PC-9 (cell line): ENCODE measurements at regions of chr7 and their contacts with region 1.

Region 1: DNA sequence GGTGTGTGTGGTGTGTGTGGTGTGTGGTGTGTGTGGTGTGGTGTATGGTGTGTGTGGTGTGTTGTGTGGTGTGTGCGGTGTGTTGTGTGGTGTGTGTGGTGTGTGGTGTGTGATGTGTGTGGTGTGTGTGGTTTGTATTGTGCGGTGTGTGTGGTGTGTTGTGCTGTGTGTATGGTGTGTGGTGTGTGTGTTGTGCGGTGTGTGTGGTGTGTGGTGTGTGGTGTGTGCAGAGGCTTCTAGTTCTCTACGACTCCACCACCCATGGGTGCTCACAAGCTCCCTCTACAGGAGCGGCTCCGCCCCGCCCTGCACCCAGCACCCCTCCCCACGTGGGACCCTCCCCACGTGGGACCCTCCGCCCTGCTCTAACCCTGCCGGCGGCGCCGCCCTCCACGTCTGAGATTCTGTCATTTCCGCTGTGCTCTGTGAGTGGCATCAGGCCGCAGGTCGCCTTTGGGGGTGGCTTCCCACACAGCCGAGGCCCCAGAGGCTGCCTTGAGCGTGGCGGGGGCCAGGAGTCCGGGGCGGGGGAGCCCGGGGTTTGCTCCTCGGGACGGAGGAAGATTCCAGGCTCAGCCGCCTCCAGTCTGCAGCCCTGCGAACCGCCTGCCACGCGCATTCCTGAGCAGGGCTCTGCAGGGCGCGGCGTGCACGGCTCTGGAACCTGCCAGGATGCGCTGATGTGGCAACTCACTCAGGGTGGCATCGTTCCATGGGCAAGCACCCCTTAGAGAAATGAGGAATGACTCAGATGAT is 37.0 kb upstream of the DNAJB6 start:
- DNase-seq: peak; percentile 66 to 72
- H3K4me3 ChIP-seq: no peak overlapping the region
- H3K27ac ChIP-seq: no peak overlapping the region
- H3K4me1 ChIP-seq: peaks cover 34% of the 10 kb centered on the region
- H3K27me3 ChIP-seq: no peaks in the 10 kb centered on the region
- CTCF ChIP-seq: no peak

Region 2: DNA sequence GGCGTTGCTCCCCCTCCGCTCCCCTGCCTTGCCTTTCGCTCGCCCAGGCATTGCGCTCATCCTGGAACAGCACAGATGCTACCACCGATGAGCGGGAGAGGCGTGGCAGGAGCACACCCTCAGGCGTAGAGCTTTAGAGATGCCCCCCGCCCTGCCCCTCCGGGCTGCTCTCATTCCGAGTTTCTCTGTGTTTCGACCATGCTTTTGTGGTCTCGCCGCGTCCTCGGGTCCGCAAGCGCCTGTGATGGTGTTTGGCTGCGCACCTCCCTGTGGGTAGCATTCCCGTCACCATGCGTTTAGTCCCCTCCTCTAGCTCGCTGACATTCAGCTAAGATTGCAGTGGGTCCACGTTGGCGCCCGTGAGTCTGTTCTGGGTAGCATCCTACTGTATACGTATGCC is 331.6 kb before region 1 on chr7:
- CTCF ChIA-PET with region 1: no interaction called
- POLR2A ChIA-PET with region 1: no interaction called
- intact Hi-C with region 1: no loop called
- DNase-seq: no peak
- H3K4me3 ChIP-seq: no peak overlapping the region
- H3K27ac ChIP-seq: no peak overlapping the region
- H3K4me1 ChIP-seq: no peaks in the 10 kb centered on the region
- H3K27me3 ChIP-seq: no peaks in the 10 kb centered on the region
- CTCF ChIP-seq: no peak

Region 3: GRCh38 chr7:157309990-157310668 is 10.3 kb after region 1 on chr7:
- CTCF ChIA-PET with region 1: no interaction called
- POLR2A ChIA-PET with region 1: no interaction called
- intact Hi-C with region 1: loop called (anchors 1 kb)
- DNase-seq: peak; percentile 78 to 99
- H3K4me3 ChIP-seq: peak overlapping the region; percentile 1; the same call in 1 of the 2 replicates
- H3K27ac ChIP-seq: peak overlapping the region; percentile 91
- H3K4me1 ChIP-seq: peaks cover 42% of the 10 kb centered on the region
- H3K27me3 ChIP-seq: no peaks in the 10 kb centered on the region
- CTCF ChIP-seq: no peak